ENCODE measurements at regions of chr5 and their contacts with region 1.

Region 1: GRCh38 chr5:67156976-67157583 is 39.5 kb downstream of the CD180 start:
- DNase-seq: no peak

Region 2: DNA sequence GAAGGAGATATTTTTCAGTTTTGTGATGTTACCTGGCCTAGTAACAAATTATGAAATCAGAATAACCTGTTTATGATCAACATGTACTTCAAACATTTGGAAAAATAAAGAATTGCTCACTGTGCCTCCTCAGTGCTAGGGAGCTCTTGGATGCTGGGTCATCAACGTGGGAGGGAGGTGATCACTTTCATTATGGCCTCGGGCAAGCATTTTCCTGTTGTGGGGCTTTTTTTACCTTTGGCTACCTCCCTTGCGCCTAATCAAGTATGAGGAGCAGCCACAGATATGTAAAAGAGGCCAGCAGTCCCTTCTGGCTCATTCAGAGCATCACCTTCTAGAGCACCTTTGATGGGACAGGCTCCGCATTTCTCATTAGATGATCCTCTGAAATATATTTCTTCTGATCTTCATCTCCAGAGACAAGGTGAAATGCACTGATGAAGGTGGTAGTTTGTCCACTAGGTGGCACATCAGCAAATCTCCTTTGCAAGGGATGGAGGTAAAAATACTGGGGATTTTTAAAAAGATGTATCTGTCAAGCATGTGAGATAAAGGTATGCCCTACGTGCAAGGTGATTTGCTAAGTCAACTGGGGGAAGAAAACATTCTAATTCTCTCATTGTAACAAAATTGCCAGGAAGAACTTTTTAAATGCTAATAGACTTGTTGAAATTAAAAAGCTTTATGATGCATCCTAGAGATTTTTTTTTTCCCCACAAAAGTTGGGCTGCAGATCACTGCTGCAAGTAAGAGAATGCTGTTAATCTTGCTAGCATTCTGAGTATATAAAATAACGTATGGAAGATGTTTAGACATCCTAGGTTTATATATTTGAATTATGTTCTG is 342.7 kb before region 1 on chr5:
- intact Hi-C with region 1: loop called in 1 of 2 experiments (anchors 10 kb)
- DNase-seq: no peak

Region 3: DNA sequence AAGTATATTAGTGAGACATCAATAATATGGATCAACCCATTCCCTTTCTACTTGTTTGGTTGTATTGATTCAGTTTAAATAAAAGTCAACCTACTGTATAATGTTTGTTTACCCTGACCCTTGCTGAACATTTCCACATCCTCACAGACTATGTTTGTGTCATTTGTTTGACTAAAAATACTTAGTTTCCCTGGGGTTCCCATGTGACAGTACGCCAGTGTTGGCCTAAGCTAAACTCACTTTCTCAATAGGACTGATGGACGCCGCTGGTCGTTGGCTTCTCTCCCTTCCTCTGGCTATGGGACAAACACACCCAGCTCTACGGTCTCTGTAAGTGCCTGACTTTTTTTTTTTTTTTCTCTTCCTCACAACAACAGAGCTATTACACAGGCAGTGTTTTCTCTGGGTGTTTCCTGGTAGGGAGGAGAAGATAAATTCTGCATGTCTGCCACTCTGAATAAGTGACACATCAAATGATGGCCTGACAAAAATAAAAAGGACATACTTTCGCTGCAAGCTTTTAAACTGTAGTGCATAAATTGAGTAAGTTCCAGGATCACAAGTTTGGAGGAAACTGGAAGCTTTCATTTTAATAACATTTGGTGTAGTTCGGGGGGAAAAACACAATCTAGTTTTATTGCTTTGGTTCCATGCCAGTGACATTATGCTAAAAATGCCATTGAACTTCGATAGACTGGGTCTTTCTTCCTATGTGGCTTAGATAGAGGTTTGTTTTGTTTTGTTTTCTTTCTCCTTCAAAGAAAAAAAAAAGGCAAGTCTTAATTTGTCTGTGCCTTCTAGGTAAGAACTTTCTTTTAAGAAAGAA is 61.5 kb before region 1 on chr5:
- intact Hi-C with region 1: no loop called
- DNase-seq: peak; percentile 89

Region 4: DNA sequence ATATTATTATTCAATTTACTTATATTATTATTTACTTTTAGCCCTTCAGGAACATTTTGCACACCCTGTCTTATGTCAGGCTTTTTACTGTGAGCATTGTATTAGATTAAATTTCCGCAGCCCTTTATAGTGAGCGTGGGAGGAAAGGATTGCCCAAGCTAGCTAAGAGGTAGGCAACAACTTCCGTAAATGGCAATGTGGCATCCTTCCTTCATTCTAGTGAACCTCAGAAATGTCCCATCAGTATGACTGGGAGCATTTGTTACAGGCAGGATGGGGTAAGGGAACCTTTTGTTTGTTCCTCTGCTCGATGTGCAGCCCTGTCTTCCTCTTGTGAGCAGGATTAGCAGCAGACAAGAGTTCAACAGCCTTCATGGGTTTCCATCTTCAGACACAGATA is 45.7 kb after region 1 on chr5:
- intact Hi-C with region 1: loop called (anchors 5 kb)
- DNase-seq: no peak

Region 5: GRCh38 chr5:67209142-67209771 is 52.2 kb after region 1 on chr5:
- intact Hi-C with region 1: loop called (anchors 5 kb)
- DNase-seq: no peak